ENCODE measurements at regions of chr1 and their contacts with region 1.

Region 1: GRCh38 chr1:65067491-65068201 is 80.4 kb upstream of the AK4 start:
- DNase-seq: peak; percentile 29 to 86 (median 64)
- ATAC-seq: peak; percentile 18
- H3K4me3 ChIP-seq: peak overlapping the region; percentile 76 to 88
- H3K4me3 Mint-ChIP-seq: peak overlapping the region; percentile 98
- H3K27ac ChIP-seq: peak overlapping the region; percentile 92 to 95
- H3K27ac Mint-ChIP-seq: peak overlapping the region; percentile 100
- H3K4me1 ChIP-seq: peaks cover 43% of the 10 kb centered on the region
- H3K4me1 Mint-ChIP-seq: peaks cover 57% of the 10 kb centered on the region
- H3K27me3 ChIP-seq: no peaks in the 10 kb centered on the region
- H3K27me3 Mint-ChIP-seq: no peaks in the 10 kb centered on the region
- CTCF ChIP-seq: no peak

Region 2: DNA sequence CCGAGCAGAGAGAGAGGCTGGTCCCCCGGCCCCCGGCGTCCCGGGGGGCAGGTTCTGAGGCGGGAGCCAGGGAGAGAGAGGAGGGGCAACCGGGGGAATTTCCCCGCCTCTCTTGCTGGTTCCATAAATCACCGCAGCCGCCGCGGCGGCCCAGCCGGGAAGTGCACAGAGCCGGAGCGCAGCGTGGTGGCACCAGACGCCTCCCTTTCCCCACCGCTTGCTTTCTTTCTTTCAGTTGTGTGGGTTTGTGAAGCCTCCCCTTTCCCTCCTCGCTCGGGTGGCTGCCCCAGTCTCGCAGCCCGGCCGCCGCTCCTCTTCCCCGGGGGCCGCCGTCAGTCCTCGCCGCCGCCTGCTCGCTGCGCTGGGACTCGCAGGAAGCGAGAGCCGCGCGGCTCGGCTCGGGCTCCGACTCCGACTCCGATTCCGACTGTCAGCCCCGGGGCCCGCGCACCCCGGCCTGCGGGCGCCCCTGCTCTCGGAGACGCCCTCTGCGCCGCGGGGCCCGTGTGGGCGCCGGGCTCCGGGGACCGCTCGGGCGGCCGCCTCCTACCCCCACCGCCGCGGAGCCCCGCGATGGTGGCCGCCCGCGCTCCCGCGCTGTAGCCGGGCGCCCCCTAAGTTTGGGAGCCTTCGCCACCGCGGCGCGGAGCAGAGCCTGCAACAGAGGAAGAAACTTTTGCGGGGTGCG is 597.5 kb before region 1 on chr1 and contains the start of gene CACHD1:
- CTCF ChIA-PET with region 1: no interaction called
- POLR2A ChIA-PET with region 1: no interaction called
- intact Hi-C with region 1: loop called in 1 of 2 experiments (anchors 10 kb)
- DNase-seq: peak; percentile 7 to 86 (median 70)
- ATAC-seq: peak; percentile 85
- H3K4me3 ChIP-seq: peak within 1 kb of the TSS; percentile 48 to 65
- H3K4me3 Mint-ChIP-seq: peak within 1 kb of the TSS; percentile 91
- H3K27ac ChIP-seq: no peak within 1 kb of the TSS
- H3K27ac Mint-ChIP-seq: no peak within 1 kb of the TSS
- H3K4me1 ChIP-seq: peaks cover 10% of the 10 kb centered on the region
- H3K4me1 Mint-ChIP-seq: peaks cover 23% of the 10 kb centered on the region
- H3K27me3 ChIP-seq: peaks cover 0 to 3% of the 10 kb centered on the region in 2 experiments
- H3K27me3 Mint-ChIP-seq: peaks cover 31% of the 10 kb centered on the region
- CTCF ChIP-seq: no peak
- total RNA-seq, gene CACHD1: 3.4 TPM

Region 3: GRCh38 chr1:64877151-64877550 is 190.5 kb before region 1 on chr1:
- CTCF ChIA-PET with region 1: interaction called, 3 read pairs
- POLR2A ChIA-PET with region 1: interaction called, 5 read pairs
- intact Hi-C with region 1: loop called (anchors 2 to 5 kb)
- DNase-seq: peak in 6 of 9 experiments; percentile 33 to 92 (median 54)
- ATAC-seq: peak; percentile 93
- H3K4me3 ChIP-seq: no peak overlapping the region
- H3K4me3 Mint-ChIP-seq: peak overlapping the region; percentile 69
- H3K27ac ChIP-seq: peak overlapping the region in 1 of 2 experiments; percentile 51
- H3K27ac Mint-ChIP-seq: peak overlapping the region; percentile 82
- H3K4me1 ChIP-seq: peaks cover 48% of the 10 kb centered on the region
- H3K4me1 Mint-ChIP-seq: peaks cover 79% of the 10 kb centered on the region
- H3K27me3 ChIP-seq: no peaks in the 10 kb centered on the region
- H3K27me3 Mint-ChIP-seq: no peaks in the 10 kb centered on the region
- CTCF ChIP-seq: no peak

Region 4: GRCh38 chr1:65002508-65003315 is 64.9 kb before region 1 on chr1:
- CTCF ChIA-PET with region 1: interaction called, 3 read pairs
- POLR2A ChIA-PET with region 1: interaction called, 4 read pairs
- intact Hi-C with region 1: loop called (anchors 2 kb)
- DNase-seq: peak; percentile 42 to 91 (median 79)
- ATAC-seq: peak; percentile 87
- H3K4me3 ChIP-seq: peak overlapping the region; percentile 56 to 66
- H3K4me3 Mint-ChIP-seq: peak overlapping the region; percentile 84
- H3K27ac ChIP-seq: peak overlapping the region; percentile 10 to 61
- H3K27ac Mint-ChIP-seq: peak overlapping the region; percentile 91
- H3K4me1 ChIP-seq: peaks cover 19% of the 10 kb centered on the region
- H3K4me1 Mint-ChIP-seq: peaks cover 30% of the 10 kb centered on the region
- H3K27me3 ChIP-seq: peaks cover 0 to 2% of the 10 kb centered on the region in 2 experiments
- H3K27me3 Mint-ChIP-seq: no peaks in the 10 kb centered on the region
- CTCF ChIP-seq: no peak

Region 5: DNA sequence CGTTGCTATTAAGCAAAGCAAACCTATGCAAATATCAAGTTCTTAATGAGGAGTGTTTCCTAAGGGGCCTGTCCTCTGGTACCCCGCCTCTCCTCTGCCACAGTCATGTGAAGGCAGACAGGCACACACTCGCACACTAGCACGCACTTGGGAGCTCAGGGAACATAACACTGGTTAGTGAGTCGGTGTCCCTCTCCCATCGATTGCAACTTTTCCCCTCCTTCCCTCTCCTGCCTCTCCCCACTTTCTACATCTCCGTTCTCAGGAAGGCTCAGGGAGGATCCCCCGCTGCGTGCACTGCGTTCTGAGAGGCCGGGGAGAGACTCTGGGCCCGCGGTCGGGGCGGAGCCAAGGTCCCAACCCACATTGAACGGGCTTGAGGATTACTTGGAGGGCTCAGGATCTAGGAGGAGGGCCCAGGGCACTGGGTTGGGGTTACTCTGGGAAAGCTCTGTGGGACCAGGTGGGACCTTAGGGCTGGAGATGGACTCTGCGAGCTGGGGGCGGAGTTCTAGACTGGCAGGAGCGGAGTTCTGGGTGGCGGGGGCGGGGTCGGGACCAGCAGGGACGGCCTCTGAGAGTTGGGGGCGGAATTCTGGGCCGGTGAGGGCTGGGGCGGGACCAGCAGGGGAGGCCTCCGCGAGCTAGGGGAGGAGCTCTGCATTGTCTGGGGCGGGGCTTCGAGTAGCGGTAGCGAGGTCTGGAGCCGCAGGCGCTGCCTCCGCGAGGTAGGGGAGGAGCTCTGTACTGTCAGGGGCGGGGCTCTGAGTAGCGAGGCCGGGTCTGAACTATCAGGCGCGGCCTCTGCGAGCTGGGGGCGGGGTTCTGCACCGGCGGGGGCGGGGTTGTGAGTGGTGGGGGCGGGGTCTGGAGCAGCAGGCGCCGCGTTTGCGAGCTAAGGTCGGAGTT is 352.3 kb after region 1 on chr1:
- CTCF ChIA-PET with region 1: no interaction called
- POLR2A ChIA-PET with region 1: interaction called, 3 read pairs
- intact Hi-C with region 1: loop called (anchors 1 to 5 kb)
- DNase-seq: peak; percentile 97 to 99 (median 98)
- ATAC-seq: peak; percentile 94
- H3K4me3 ChIP-seq: peak overlapping the region; percentile 96 to 98
- H3K4me3 Mint-ChIP-seq: no peak overlapping the region
- H3K27ac ChIP-seq: peak overlapping the region; percentile 69 to 71
- H3K27ac Mint-ChIP-seq: peak overlapping the region; percentile 93
- H3K4me1 ChIP-seq: peaks cover 15% of the 10 kb centered on the region
- H3K4me1 Mint-ChIP-seq: peaks cover 21% of the 10 kb centered on the region
- H3K27me3 ChIP-seq: peaks cover 0 to 3% of the 10 kb centered on the region in 2 experiments
- H3K27me3 Mint-ChIP-seq: no peaks in the 10 kb centered on the region
- CTCF ChIP-seq: no peak

Measured in CD8-positive, alpha-beta T cell (primary cell).